Right ventricle myocardium inferior (tissue), 1 donor: ENCODE measurements at regions of chr1 and their contacts with region 1.

Region 1: GRCh38 chr1:196372896-196373536 is 235.2 kb downstream of the KCNT2 start:
- DNase-seq: no peak
- ATAC-seq: no peak

Region 2: DNA sequence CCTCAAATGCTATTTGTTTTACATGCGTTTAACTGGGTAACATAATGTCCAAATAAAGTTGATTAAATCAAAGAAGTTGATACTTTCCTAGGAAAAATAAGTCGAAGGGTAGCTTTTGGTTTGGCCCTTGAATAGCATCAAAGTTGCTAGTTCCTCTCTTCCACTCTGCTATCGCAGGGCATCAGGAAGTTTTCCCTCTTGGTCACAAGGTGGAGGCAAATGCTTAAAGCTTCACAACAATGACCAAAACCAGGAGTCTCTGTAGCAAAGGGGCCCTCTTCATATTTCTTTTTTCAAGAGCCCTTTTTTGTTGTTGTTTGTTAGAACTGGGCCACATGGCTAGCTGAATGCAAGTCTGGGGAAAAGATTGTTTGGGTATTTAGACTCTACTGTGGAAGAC is 433.2 kb before region 1 on chr1:
- intact Hi-C with region 1: loop called (anchors 10 kb)
- DNase-seq: no peak
- ATAC-seq: no peak

Region 3: GRCh38 chr1:196450143-196451095 is 77.4 kb after region 1 on chr1:
- intact Hi-C with region 1: no loop called
- DNase-seq: no peak
- ATAC-seq: no peak